ENCODE measurements at regions of chr2 and their contacts with region 1.

Region 1: DNA sequence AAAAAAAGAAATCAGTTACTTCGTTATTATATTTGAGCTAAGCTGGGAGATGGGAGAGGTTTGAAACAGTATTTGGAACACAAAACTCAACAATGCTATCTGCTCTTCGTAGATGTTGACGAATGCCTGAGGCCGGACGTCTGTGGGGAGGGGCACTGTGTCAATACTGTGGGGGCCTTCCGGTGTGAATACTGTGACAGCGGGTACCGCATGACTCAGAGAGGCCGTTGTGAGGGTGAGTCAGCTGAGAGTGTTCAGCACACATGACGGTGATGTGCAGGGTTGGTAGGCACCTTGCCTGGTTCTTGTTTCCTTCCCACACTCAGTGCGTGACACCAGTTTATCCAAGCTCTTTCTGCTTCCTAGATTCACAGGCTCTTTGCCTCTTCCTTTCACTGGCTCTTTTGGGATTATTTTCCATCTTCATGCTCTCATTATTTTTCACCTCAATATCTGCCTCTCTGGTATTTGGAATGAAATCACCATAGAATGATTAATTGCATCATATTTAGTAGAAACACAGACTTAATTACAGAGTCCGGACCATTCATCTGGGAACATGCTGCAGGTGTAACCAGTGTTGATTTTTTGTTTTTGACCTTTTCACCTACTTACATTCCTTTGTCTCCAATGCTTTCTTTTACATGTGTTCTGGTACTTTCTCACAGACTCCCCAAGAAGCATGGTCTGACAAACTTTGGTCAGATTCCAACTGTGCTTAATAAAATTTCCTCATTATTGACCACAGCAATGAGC is 200.6 kb upstream of the RASGRP3 start:
- DNase-seq: no peak
- H3K4me3 ChIP-seq: no peak overlapping the region
- H3K27ac ChIP-seq: no peak overlapping the region
- H3K4me1 ChIP-seq: peaks cover 26% of the 10 kb centered on the region
- CTCF ChIP-seq: no peak

Region 2: GRCh38 chr2:33312355-33312754 is 36.5 kb after region 1 on chr2:
- CTCF ChIA-PET with region 1: no interaction called
- POLR2A ChIA-PET with region 1: no interaction called
- intact Hi-C with region 1: no loop called
- DNase-seq: no peak
- H3K4me3 ChIP-seq: no peak overlapping the region
- H3K27ac ChIP-seq: no peak overlapping the region
- H3K4me1 ChIP-seq: no peaks in the 10 kb centered on the region
- CTCF ChIP-seq: no peak

Region 3: DNA sequence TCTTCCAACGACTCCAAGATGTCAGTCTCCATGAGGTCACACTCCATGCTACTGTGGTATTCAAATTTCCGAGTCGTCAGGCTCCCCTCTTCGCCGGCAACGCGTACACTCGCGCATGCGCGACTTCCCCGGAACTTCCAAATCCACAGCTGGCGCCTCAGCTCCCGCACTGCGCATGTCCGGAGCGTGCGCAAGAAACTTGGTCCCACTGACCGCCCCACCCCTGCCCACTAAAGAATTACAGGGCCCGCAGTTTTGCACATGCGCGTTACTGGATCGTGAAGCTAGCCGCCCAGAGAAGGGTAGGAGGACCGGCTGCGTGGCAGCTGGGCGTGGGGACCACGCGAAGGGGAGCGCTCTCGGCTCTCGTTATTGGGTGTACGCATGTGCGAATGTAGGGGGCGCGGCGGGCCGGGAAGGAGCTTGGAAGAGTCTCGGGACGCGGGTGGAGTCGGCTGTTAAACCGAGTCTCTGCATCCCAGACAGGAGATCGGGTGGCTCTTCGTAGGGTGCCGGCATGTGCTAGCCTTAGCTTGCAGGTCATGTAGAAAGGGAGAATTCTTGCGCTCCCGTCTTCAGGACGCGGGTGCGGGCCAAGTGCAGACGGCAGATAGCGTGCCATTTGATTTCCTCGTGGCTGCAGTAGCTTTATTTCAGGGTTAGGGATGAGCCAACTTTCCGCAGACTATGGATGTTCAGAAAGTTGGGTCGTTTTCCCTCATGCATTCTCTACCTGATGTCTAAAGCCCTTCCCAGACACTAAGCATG is 323.5 kb after region 1 on chr2 and contains the start of gene FAM98A:
- CTCF ChIA-PET with region 1: no interaction called
- POLR2A ChIA-PET with region 1: no interaction called
- intact Hi-C with region 1: loop called (anchors 10 kb)
- DNase-seq: peak; percentile 99
- H3K4me3 ChIP-seq: peak within 1 kb of the TSS; percentile 93
- H3K27ac ChIP-seq: peak within 1 kb of the TSS; percentile 51
- H3K4me1 ChIP-seq: peaks cover 19% of the 10 kb centered on the region
- CTCF ChIP-seq: no peak; the same call in 1 of the 2 replicates
- total RNA-seq, gene FAM98A: 33.2 and 35.7 TPM in 2 replicates

Measured in OCI-LY7 (cell line).